Heart right ventricle (tissue), 16 donors: ENCODE measurements at regions of chr14 and their contacts with region 1.

Region 1: GRCh38 chr14:99664058-99664936 is 19.4 kb downstream of the HHIPL1 start:
- DNase-seq: no peak
- ATAC-seq: no peak
- H3K4me3 ChIP-seq: no peak overlapping the region
- H3K27ac ChIP-seq: no peak overlapping the region
- H3K4me1 ChIP-seq: peaks cover 0 to 6% (median 0%) of the 10 kb centered on the region in 9 donors
- H3K27me3 ChIP-seq: peaks cover 2 to 28% (median 16%) of the 10 kb centered on the region in 7 donors
- CTCF ChIP-seq: no peak

Region 2: GRCh38 chr14:100078991-100079725 is 414.9 kb after region 1 on chr14:
- intact Hi-C with region 1: loop called in 1 of 10 experiments (anchors 10 kb)
- DNase-seq: peak in 1 of 2 donors; percentile 21
- ATAC-seq: peak in 7 of 8 donors; percentile 27 to 70 (median 43)
- H3K4me3 ChIP-seq: peak overlapping the region in 1 of 10 donors; percentile 9
- H3K27ac ChIP-seq: peak overlapping the region in 7 of 10 donors; percentile 9 to 81 (median 39)
- H3K4me1 ChIP-seq: peaks cover 0 to 84% (median 27%) of the 10 kb centered on the region in 9 donors
- H3K27me3 ChIP-seq: no peaks in the 10 kb centered on the region
- CTCF ChIP-seq: peak in 1 of 9 donors; percentile 19